ENCODE measurements at regions of chr17 and their contacts with region 1.

Region 1: GRCh38 chr17:77404812-77405581 is 264.2 kb downstream of the SEC14L1 start:
- DNase-seq: peak; percentile 97
- H3K4me3 ChIP-seq: peak overlapping the region; percentile 72
- H3K27ac ChIP-seq: peak overlapping the region; percentile 90
- H3K4me1 ChIP-seq: peaks cover 100% of the 10 kb centered on the region
- CTCF ChIP-seq: 0 out of 2 replicates have a peak, but pooled peaks have one; percentile 25

Region 2: DNA sequence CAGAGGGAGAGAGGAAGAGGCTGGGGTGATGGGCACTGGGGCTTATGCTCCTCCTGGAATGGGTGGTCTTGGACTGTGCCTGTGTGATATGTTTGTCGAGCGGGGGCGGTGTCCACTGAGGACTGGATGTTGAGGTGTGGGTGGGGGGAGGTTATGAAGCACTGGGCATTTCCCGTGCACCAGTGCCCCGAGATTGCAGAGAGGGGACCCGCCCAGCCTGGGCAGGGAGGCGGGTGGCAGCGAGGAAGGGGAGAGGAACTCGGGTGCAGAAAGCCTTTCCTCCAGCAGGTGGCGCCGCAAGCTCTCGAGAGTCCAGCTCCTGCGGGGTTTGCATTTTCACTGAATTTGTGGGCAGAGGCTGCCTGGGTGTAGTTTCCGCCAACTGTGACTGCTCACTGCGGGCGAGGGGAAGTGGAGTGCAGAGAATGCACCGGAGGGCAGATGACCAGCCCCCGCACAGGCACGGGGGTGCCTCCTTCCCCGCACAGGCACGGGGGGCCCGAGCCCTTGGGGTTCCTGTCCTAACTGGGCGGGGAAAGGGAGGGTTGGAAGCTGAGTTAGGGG is 73.6 kb before region 1 on chr17:
- CTCF ChIA-PET with region 1: interaction called, 4 read pairs
- POLR2A ChIA-PET with region 1: interaction called, 3 read pairs
- intact Hi-C with region 1: loop called (anchors 1 kb)
- DNase-seq: peak; percentile 98
- H3K4me3 ChIP-seq: peak overlapping the region; percentile 62
- H3K27ac ChIP-seq: peak overlapping the region; percentile 92
- H3K4me1 ChIP-seq: peaks cover 86% of the 10 kb centered on the region
- CTCF ChIP-seq: peak; percentile 99

Region 3: GRCh38 chr17:77420804-77421629 is 16.0 kb after region 1 on chr17:
- CTCF ChIA-PET with region 1: interaction called, 10 read pairs
- POLR2A ChIA-PET with region 1: interaction called, 7 read pairs
- intact Hi-C with region 1: no loop called
- DNase-seq: peak; percentile 77
- H3K4me3 ChIP-seq: peak overlapping the region; percentile 44
- H3K27ac ChIP-seq: peak overlapping the region; percentile 65
- H3K4me1 ChIP-seq: peaks cover 53% of the 10 kb centered on the region
- CTCF ChIP-seq: no peak

Region 4: DNA sequence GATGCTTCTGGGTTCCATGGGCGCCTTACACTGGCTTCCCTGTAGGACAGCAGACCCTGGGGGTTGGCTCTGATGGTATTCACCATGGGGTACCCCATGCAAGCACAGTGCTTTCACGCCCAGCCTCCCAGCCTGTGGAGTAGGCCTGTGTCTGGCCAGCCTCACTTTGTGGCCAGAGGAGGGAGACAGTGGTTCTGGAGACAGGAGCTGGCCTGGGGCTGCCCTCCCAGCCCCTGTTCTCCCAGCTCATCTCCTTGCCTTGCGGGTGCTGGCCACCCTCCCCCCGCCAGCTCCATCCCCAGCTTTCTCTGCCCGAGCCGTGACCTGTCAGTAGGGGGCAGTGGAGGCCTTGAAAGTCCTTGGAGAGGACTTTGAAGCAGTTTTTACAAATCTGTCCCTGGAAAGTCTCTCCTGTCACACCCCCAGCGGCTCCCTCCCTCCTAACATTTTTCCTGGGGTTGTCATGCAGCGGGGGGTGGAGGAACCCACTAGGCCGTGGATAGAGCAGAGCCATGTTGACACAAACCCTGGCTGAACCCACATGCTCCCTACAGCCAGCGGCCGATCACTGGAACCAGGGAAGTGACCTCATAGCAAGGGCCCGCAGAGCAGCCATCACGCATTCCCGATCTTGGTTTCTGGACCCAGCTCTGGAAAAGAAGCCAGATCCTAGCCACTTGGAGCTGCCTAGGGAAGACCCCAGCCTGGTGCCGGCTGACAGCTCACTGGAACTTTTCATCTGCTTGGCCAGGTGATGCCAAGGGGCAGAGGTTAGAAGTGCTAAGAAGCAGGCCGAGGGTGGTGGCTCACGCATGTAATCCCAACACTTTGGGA is 25.1 kb after region 1 on chr17:
- CTCF ChIA-PET with region 1: interaction called, 33 read pairs
- POLR2A ChIA-PET with region 1: interaction called, 15 read pairs
- intact Hi-C with region 1: loop called (anchors 1 kb)
- DNase-seq: peak; percentile 89
- H3K4me3 ChIP-seq: peak overlapping the region; percentile 15
- H3K27ac ChIP-seq: peak overlapping the region; percentile 65
- H3K4me1 ChIP-seq: peaks cover 100% of the 10 kb centered on the region
- CTCF ChIP-seq: peak; percentile 99

Region 5: GRCh38 chr17:77451245-77451893 is 46.4 kb after region 1 on chr17:
- CTCF ChIA-PET with region 1: interaction called, 6 read pairs
- POLR2A ChIA-PET with region 1: interaction called, 9 read pairs
- intact Hi-C with region 1: loop called (anchors 2 kb)
- DNase-seq: peak; percentile 84
- H3K4me3 ChIP-seq: peak overlapping the region; percentile 76
- H3K27ac ChIP-seq: peak overlapping the region; percentile 95
- H3K4me1 ChIP-seq: peaks cover 69% of the 10 kb centered on the region
- CTCF ChIP-seq: no peak

Region 6: DNA sequence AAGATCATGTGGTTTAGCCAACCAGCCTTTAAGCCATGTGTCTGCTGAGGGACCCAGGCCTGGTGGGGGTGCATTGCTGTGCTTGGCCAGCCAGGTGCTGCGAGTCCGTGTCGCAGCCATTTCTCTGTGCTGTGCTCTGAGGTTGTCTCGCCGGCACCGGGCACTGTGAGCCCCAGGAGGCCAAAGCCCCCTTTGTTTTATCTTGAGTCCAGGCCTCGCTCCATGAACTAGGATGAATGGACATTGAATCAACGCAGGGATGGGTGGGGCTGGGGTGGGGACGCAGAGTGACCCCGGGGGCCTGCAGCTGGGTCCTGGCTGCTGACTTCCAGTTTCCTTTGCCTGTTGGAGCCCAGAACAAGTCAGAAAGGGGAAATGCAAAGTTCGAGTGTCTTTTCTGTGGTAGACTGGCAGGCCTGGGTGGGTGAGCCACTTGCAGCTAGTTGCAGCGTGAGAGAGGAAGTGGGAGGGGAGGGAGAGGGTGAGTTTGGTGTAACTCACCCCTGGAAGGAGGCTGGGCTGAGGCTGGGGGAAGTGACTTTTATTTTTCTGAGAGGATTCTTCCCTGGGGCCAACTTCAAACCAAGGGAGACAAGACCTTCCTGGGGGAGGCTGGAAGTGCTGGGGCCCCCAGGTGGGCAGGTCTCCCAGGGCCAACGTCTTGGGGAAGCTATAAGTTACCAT is 60.5 kb after region 1 on chr17:
- CTCF ChIA-PET with region 1: interaction called, 12 read pairs
- POLR2A ChIA-PET with region 1: interaction called, 4 read pairs
- intact Hi-C with region 1: loop called (anchors 2 kb)
- DNase-seq: peak; percentile 96
- H3K4me3 ChIP-seq: peak overlapping the region; percentile 52
- H3K27ac ChIP-seq: peak overlapping the region; percentile 95
- H3K4me1 ChIP-seq: peaks cover 97% of the 10 kb centered on the region
- CTCF ChIP-seq: no peak

Measured in OCI-LY7 (cell line).